Activated CD4-positive, alpha-beta memory T cell treated with anti-CD3 and anti-CD28 coated beads for 36 hours (primary cell): ENCODE measurements at regions of chr4 and their contacts with region 1.

Region 1: GRCh38 chr4:155376387-155377268 is at the start of gene MAP9:
- DNase-seq: peak; percentile 92
- H3K4me3 Mint-ChIP-seq: peak within 1 kb of the TSS; percentile 86
- H3K27ac Mint-ChIP-seq: peak within 1 kb of the TSS; percentile 84
- H3K4me1 Mint-ChIP-seq: peaks cover 16% of the 10 kb centered on the region
- H3K27me3 Mint-ChIP-seq: no peaks in the 10 kb centered on the region
- total RNA-seq, gene MAP9: 6.9 to 8.3 TPM

Region 2: GRCh38 chr4:154626793-154627484 is 749.7 kb before region 1 on chr4:
- CTCF ChIA-PET with region 1: no interaction called
- POLR2A ChIA-PET with region 1: no interaction called
- intact Hi-C with region 1: loop called (anchors 10 kb)
- DNase-seq: peak; percentile 68
- H3K4me3 Mint-ChIP-seq: no peak overlapping the region
- H3K27ac Mint-ChIP-seq: no peak overlapping the region
- H3K4me1 Mint-ChIP-seq: no peaks in the 10 kb centered on the region
- H3K27me3 Mint-ChIP-seq: peaks cover 15% of the 10 kb centered on the region

Region 3: DNA sequence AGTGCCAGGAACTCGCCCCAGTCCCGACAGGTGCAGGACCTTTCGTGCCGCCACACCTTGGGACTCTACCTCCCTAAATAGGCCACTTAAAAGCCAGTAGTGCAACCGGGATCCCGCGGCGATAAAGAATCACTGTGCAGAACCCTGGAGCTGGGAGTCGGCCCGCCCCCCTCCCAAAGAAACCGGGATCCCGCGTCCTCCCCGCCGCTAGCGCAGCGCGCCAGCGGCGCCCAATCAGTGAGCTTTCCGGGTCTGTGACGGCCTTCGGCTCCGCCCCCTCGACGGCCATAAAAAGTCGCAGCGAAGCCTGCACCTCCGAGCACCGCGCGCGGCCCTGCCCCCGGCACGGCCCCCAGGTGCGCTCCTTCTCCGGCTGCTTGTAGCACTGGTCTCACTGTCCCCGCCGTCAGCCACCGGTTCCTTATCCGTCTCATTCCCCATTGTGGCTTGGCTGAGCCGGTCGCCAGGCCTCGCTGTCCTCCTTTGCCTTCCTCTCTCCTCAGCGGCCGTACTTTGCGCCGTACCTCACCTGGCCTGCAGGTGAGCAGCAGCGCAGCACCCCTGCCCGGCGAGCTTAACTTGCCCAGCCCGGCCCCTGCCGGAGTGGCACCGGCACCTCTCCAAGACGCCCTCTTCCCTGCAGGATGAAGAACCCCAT is 632.8 kb before region 1 on chr4 and contains the start of gene LRAT:
- CTCF ChIA-PET with region 1: no interaction called
- POLR2A ChIA-PET with region 1: no interaction called
- intact Hi-C with region 1: loop called (anchors 10 kb)
- DNase-seq: peak; percentile 56
- H3K4me3 Mint-ChIP-seq: peak within 1 kb of the TSS; percentile 77
- H3K27ac Mint-ChIP-seq: no peak within 1 kb of the TSS
- H3K4me1 Mint-ChIP-seq: peaks cover 13% of the 10 kb centered on the region
- H3K27me3 Mint-ChIP-seq: peaks cover 56% of the 10 kb centered on the region
- total RNA-seq, gene LRAT: not detected

Region 4: GRCh38 chr4:155047755-155048154 is 328.9 kb before region 1 on chr4:
- CTCF ChIA-PET with region 1: no interaction called
- POLR2A ChIA-PET with region 1: no interaction called
- intact Hi-C with region 1: no loop called
- DNase-seq: no peak
- H3K4me3 Mint-ChIP-seq: no peak overlapping the region
- H3K27ac Mint-ChIP-seq: no peak overlapping the region
- H3K4me1 Mint-ChIP-seq: no peaks in the 10 kb centered on the region
- H3K27me3 Mint-ChIP-seq: no peaks in the 10 kb centered on the region

Region 5: DNA sequence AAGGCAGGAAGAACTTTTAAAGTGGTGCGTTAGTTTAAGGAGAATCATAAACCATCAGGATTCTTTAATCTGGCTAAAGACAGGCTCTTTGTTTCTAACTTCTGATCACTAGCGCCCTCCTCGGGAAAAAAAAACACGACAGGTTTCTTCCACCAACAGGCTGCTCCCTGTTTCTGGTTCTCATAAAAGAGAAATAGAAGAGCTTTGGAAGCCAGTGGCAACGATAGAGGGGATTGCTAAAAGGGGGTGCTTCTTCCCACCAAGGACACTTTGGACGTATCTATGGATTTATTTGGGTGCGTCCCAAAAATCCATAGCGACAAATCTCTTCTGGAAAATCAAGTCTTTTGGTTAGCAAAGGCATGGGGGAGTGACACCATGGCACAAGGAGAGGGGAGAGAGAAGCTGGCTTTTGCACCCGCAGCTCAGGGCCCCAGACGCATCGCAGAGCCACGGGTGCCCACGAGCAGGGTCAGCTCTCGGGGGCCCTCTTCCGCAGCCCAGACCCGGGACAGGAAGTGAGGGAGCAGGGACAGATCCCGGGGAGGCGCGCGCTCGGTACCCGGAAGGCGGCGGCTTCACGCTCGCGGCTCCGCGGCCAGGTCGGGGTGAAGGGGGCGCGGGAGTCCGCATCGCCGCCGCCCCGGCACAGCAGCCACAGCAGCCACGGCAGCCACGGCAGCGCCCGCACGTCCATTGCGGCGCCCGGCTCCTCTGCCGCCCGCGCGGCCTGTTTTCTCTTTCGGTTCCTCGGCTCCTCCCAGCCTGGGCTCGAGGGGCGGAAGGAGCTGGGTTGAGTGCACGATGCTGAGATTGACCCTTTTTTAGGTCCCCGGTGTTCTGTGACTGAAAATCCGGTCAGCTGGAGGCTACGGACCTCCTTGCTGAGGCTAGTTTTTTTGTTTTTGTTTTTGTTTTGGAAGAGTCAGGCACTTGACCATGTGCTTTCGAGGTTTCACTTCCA is 576.8 kb after region 1 on chr4 and contains the start of gene CTSO:
- CTCF ChIA-PET with region 1: no interaction called
- POLR2A ChIA-PET with region 1: interaction called, 3 read pairs
- intact Hi-C with region 1: loop called (anchors 2 kb)
- DNase-seq: peak; percentile 78
- H3K4me3 Mint-ChIP-seq: peak within 1 kb of the TSS; percentile 93
- H3K27ac Mint-ChIP-seq: peak within 1 kb of the TSS; percentile 92
- H3K4me1 Mint-ChIP-seq: peaks cover 14% of the 10 kb centered on the region
- H3K27me3 Mint-ChIP-seq: peaks cover 4% of the 10 kb centered on the region
- total RNA-seq, gene CTSO: 2.5 to 2.6 TPM